Naive thymus-derived CD4-positive, alpha-beta T cell (primary cell): ENCODE measurements at regions of chr4 and their contacts with region 1.

Region 1: DNA sequence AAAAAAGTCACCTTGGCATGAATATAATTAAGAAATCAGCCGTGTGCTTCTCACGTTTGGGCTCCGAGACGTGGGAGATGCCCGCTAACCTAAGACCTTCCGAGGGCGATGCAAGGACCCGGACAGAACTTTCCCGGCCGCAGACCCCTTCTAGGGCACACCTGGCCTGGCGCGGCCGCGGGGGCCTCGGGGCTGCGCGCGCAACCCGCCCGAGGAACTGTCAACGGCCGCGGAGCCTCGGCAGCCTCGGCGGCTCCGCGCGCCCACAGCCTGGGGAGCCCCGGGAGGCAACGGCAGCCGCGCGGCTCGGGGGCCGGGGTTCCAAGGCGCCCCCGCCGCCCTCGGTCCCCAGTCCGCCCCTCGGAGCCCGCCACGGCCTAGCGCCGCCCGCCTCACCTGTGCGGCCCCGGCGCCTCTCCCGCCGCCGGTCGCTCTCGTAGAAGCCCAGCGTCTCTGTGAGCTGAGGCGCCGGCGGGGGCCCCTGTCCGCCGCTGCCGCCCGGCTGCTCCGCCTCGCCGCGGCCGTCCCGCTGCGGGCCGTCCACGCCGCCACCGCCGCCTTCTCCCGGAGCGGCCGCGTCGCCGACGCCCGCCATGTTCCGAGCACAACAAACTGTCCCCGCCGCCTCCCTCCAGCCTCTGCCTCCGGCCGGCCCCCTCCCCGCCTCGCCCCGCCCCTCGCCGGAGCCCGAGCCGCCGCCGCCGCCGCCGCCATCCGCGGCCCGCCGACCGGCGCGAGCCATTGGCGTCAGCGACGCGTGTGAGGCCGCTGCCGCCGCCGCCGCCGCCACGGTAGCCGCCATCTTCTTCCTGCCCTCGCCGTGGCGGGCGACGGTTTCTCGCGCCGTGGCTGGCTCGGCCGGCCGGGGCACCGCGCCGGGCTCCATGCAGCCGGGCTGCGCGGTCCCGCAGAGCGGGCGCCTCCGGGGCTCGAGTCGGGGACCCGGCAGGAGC is at the start of gene TAPT1:
- DNase-seq: peak; percentile 49 to 89 (median 63)
- ATAC-seq: peak; percentile 84
- H3K4me3 ChIP-seq: peak within 1 kb of the TSS; percentile 74
- H3K4me3 Mint-ChIP-seq: peak within 1 kb of the TSS; percentile 85 to 96 (median 92)
- H3K27ac ChIP-seq: peak within 1 kb of the TSS; percentile 84
- H3K27ac Mint-ChIP-seq: peak within 1 kb of the TSS; percentile 90 to 98 (median 96)
- H3K4me1 ChIP-seq: peaks cover 30 to 35% of the 10 kb centered on the region in 2 donors
- H3K4me1 Mint-ChIP-seq: peaks cover 40 to 67% (median 58%) of the 10 kb centered on the region in 7 donors
- H3K27me3 ChIP-seq: no peaks in the 10 kb centered on the region
- H3K27me3 Mint-ChIP-seq: peaks cover 0 to 2% (median 0%) of the 10 kb centered on the region in 5 donors
- total RNA-seq, gene TAPT1: 43.0 to 82.5 (median 70.6) TPM

Region 2: DNA sequence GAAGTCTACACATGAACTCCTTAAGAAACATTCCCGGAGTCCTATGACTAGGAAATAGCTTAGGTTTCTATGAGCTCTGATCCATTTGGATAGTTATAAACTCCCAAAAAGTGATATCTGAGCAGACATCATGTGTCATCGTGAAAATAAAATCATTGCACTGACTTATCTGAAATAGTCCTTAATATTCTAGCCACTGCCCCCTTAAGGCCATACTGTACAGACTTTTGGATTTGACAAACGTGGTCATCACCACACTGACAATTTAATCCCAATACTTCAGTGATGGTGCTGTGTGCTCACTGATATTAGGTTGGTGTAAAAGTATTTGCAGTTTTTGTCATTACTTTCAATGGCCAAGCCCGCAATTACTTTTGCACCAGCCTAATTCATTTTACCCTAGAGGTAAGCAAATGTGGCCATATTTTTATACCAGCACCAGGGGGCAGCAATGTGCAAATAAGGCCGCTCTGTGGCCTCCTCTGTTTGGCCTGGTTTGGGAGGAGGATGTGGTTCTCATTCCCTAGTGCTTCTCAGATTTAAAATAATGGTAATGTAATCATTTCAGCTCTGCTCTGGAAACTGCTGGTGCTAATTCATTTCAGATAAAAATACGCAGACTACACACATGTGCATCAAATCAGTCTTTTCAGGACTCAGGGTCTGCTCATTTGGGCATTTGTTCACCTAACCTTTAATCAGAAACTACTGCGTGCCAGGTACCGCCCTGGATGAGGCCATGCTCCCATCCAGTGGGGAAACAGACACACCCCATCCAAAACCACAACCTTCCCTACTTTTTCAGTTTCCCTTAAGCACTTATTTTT is 994.7 kb before region 1 on chr4:
- CTCF ChIA-PET with region 1: no interaction called
- POLR2A ChIA-PET with region 1: no interaction called
- intact Hi-C with region 1: loop called in 1 of 2 experiments (anchors 10 kb)
- DNase-seq: peak; percentile 45 to 72 (median 69)
- ATAC-seq: peak; percentile 86
- H3K4me3 ChIP-seq: no peak overlapping the region
- H3K4me3 Mint-ChIP-seq: no peak overlapping the region
- H3K27ac ChIP-seq: no peak overlapping the region
- H3K27ac Mint-ChIP-seq: peak overlapping the region in 4 of 9 donors; percentile 11 to 68 (median 44)
- H3K4me1 ChIP-seq: peaks cover 0 to 27% of the 10 kb centered on the region in 2 donors
- H3K4me1 Mint-ChIP-seq: peaks cover 24 to 39% (median 35%) of the 10 kb centered on the region in 7 donors
- H3K27me3 ChIP-seq: no peaks in the 10 kb centered on the region
- H3K27me3 Mint-ChIP-seq: peaks cover 0 to 3% (median 0%) of the 10 kb centered on the region in 5 donors

Region 3: DNA sequence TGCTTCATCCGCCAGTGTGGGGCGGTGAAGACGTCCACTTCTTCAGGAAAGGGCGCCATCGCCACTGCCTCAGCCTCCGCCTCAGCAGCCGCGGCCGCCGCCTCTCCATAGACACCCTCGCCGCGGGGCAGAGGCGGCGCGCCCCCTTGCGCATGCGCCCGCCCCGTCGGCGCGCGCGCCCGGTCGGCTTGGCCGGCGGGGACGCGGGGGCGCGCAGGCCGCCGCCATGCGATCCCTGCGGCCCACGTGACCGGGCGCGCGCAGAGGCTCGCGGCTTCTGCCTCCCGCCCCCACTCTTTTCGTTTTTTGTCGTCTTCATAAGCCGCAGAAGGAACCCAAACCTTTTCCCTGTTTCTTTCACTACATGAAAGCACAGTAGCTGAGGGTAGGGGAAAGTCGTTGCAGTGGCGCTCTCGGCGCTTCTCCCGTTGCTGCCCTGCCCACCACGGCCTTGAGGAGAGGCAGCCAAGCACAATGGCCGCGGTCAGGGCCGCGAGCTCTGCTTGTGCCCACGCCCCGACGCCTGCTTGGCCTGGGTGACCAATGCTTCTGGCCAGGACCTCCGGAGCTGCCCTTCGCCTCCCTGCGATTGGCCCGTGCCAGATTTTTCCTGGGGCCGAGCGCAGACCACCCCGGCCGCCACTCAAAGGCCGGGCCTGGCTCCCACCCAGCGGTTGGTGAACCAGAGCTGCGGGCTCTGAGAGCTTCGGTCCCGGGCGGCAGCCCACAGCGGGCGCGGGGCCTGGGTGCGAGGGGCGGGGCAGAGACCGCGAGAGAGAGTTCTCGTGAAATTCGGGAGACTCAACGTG is 570.7 kb before region 1 on chr4 and contains the start of gene FBXL5:
- CTCF ChIA-PET with region 1: no interaction called
- POLR2A ChIA-PET with region 1: interaction called, 6 read pairs
- intact Hi-C with region 1: loop called (anchors 1 to 5 kb)
- DNase-seq: peak; percentile 77 to 92 (median 87)
- ATAC-seq: peak; percentile 92
- H3K4me3 ChIP-seq: peak within 1 kb of the TSS; percentile 87
- H3K4me3 Mint-ChIP-seq: peak within 1 kb of the TSS; percentile 94 to 100 (median 97)
- H3K27ac ChIP-seq: peak within 1 kb of the TSS; percentile 90
- H3K27ac Mint-ChIP-seq: peak within 1 kb of the TSS; percentile 90 to 98 (median 98)
- H3K4me1 ChIP-seq: peaks cover 29% of the 10 kb centered on the region in 2 donors
- H3K4me1 Mint-ChIP-seq: peaks cover 21 to 49% (median 45%) of the 10 kb centered on the region in 7 donors
- H3K27me3 ChIP-seq: no peaks in the 10 kb centered on the region
- H3K27me3 Mint-ChIP-seq: peaks cover 0 to 2% (median 0%) of the 10 kb centered on the region in 5 donors
- total RNA-seq, gene FBXL5: 39.1 to 107 (median 57.4) TPM

Region 4: DNA sequence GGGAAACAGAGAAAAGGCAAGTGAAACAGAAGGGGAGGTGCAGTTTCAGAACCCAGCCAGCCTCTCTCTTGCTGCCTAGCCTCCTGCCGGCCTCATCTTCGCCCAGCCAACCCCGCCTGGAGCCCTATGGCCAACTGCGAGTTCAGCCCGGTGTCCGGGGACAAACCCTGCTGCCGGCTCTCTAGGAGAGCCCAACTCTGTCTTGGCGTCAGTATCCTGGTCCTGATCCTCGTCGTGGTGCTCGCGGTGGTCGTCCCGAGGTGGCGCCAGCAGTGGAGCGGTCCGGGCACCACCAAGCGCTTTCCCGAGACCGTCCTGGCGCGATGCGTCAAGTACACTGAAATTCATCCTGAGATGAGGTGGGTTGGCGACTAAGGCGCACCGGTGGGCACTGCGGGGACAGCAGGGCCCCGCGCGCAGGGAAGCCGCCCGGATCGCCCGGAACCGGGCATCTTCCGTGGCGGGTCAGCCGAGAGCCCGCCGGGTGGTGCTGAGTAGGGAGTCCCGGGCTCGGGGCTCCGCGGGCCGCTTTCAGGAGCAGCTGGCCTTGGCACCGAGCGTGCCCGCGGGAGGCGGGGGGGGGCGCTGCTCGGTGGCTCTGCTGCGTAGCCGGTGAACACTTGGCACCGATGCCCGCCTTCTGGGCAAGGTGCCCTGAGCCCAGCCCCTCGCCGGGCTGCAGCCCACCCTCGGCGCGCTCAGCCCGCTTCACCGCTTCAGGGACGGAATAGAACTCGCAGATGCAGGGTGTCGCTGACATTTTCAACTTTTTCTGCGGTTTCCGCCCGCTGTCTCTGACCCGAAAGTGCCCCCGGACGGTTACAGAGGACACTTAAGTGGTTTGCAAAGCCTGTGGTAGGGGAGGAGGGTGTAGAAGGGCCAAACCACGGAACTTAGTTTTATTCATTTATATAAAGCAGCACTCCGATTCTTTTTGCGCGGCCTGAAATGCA is 447.6 kb before region 1 on chr4 and contains the start of gene CD38:
- CTCF ChIA-PET with region 1: no interaction called
- POLR2A ChIA-PET with region 1: no interaction called
- intact Hi-C with region 1: loop called in 1 of 2 experiments (anchors 5 kb)
- DNase-seq: peak; percentile 16 to 67 (median 37)
- ATAC-seq: peak; percentile 66
- H3K4me3 ChIP-seq: peak within 1 kb of the TSS; percentile 71
- H3K4me3 Mint-ChIP-seq: peak within 1 kb of the TSS; percentile 86 to 97 (median 94)
- H3K27ac ChIP-seq: peak within 1 kb of the TSS; percentile 65
- H3K27ac Mint-ChIP-seq: peak within 1 kb of the TSS; percentile 81 to 93 (median 87)
- H3K4me1 ChIP-seq: peaks cover 12 to 32% of the 10 kb centered on the region in 2 donors
- H3K4me1 Mint-ChIP-seq: peaks cover 37 to 82% (median 77%) of the 10 kb centered on the region in 7 donors
- H3K27me3 ChIP-seq: no peaks in the 10 kb centered on the region
- H3K27me3 Mint-ChIP-seq: no peaks in the 10 kb centered on the region
- total RNA-seq, gene CD38: 5.6 to 189 (median 14.3) TPM

Region 5: DNA sequence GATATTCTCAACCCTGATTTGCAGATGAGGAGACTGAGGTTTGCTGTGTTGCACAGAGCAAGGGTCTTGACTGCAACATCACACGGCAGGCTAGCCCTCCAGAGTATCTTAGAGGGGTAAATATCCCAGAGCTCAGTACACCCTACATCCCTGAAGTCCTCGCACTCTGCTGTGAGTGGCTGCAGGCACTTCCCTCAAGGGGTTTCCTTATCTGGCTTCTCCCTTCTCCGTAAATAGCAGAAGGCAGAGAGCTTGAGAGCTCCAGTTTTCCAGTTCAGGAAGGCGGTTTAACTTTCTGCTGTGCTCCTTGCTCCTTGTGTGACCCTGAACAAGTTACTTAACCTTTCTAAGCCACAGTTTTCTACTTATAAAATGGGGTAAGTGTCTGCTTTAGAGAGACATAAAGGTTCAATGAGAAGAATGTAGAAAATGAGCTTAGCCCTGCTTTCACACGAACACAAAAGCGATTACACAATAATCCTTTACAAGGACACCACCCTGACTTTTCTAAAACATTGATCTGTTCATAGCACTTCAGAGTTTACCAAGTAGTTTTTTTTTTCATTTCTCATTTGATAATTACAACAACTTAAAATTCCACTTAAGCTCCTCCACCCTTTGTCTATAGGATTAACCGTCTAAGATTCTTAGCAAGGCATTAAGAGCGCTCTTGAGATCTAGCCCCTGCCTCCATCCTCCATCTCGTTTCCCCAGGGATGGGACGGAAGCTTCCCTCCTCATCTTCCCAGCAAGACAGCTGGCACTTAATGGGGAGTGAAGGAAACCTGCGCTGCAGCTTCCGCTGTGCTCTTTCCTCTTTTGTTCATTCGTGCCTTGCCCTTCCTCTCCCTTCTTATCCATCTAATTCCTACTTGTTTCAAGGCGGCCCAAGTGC is 68.3 kb before region 1 on chr4:
- CTCF ChIA-PET with region 1: no interaction called
- POLR2A ChIA-PET with region 1: no interaction called
- intact Hi-C with region 1: no loop called
- DNase-seq: no peak
- ATAC-seq: no peak
- H3K4me3 ChIP-seq: no peak overlapping the region
- H3K4me3 Mint-ChIP-seq: no peak overlapping the region
- H3K27ac ChIP-seq: no peak overlapping the region
- H3K27ac Mint-ChIP-seq: peak overlapping the region in 1 of 9 donors; percentile 40
- H3K4me1 ChIP-seq: no peaks in the 10 kb centered on the region
- H3K4me1 Mint-ChIP-seq: peaks cover 0 to 14% (median 0%) of the 10 kb centered on the region in 7 donors
- H3K27me3 ChIP-seq: no peaks in the 10 kb centered on the region
- H3K27me3 Mint-ChIP-seq: no peaks in the 10 kb centered on the region

Region 6: DNA sequence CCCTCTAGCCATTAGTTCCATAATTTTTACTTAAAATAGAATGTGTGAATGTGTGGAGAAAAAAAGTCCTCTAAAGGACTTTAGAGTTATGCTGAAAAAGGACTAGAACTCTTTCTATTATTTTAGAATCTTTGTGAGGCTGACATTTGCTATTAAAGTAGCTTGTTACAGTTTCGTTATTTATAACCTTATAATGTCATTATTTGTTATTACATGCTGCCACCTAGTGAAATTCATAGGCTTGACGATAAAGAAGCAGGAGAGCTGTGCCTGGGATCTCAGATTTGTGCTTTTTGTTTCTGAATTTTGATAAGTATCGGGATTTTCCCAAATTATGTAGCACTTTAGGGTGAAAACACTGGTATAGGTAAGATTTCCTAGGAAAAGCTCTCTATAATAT is 38.7 kb after region 1 on chr4:
- CTCF ChIA-PET with region 1: interaction called, 3 read pairs
- POLR2A ChIA-PET with region 1: interaction called, 3 read pairs
- intact Hi-C with region 1: loop called (anchors 2 to 5 kb)
- DNase-seq: peak in 7 of 9 donors; percentile 14 to 59 (median 34)
- ATAC-seq: peak; percentile 40
- H3K4me3 ChIP-seq: no peak overlapping the region
- H3K4me3 Mint-ChIP-seq: no peak overlapping the region
- H3K27ac ChIP-seq: no peak overlapping the region
- H3K27ac Mint-ChIP-seq: no peak overlapping the region
- H3K4me1 ChIP-seq: peaks cover 0 to 3% of the 10 kb centered on the region in 2 donors
- H3K4me1 Mint-ChIP-seq: peaks cover 0 to 11% (median 4%) of the 10 kb centered on the region in 7 donors
- H3K27me3 ChIP-seq: no peaks in the 10 kb centered on the region
- H3K27me3 Mint-ChIP-seq: peaks cover 0 to 2% (median 0%) of the 10 kb centered on the region in 5 donors

Region 7: DNA sequence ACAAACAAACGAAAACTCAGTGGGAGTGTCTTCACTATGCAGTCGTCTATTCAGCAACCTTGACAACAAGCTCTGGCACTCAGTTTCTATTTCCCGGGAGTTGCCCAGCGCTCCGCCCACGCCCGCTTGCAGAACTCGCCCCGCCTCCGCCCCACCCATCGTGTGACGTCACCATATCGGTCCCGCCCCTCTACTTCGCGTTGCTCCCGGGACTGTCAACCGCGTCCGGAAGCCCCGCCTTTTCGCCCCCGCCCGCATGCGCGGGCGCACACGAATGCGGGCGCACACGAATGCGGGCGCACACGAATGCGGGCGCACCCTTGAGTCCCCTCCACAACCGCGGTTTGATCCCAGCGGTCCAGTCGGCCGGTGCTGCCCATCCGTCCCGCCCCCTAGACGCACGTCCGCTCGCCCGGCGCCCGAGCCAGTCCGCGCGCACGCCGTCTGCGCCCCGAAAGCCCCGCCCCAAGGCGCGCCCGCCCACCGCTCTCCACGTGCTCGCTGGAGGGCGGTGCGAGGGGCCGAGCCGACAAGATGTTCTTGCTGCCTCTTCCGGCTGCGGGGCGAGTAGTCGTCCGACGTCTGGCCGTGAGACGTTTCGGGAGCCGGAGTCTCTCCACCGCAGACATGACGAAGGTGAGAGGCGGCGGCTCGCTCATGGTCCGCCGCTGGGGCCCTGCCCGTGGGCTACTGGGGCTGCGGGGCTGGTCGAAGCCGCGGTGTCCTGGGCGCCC is 1351.0 kb after region 1 on chr4 and contains the start of gene LAP3:
- CTCF ChIA-PET with region 1: no interaction called
- POLR2A ChIA-PET with region 1: no interaction called
- intact Hi-C with region 1: loop called in 1 of 2 experiments (anchors 1 kb)
- DNase-seq: peak; percentile 97 to 100 (median 99)
- ATAC-seq: peak; percentile 94
- H3K4me3 ChIP-seq: peak within 1 kb of the TSS; percentile 77
- H3K4me3 Mint-ChIP-seq: peak within 1 kb of the TSS; percentile 78 to 96 (median 92)
- H3K27ac ChIP-seq: peak within 1 kb of the TSS; percentile 96
- H3K27ac Mint-ChIP-seq: peak within 1 kb of the TSS; percentile 92 to 100 (median 97)
- H3K4me1 ChIP-seq: peaks cover 4 to 11% of the 10 kb centered on the region in 2 donors
- H3K4me1 Mint-ChIP-seq: peaks cover 20 to 47% (median 24%) of the 10 kb centered on the region in 7 donors
- H3K27me3 ChIP-seq: no peaks in the 10 kb centered on the region
- H3K27me3 Mint-ChIP-seq: peaks cover 0 to 2% (median 0%) of the 10 kb centered on the region in 5 donors
- total RNA-seq, gene LAP3: 25.2 to 142 (median 54.9) TPM

Region 8: DNA sequence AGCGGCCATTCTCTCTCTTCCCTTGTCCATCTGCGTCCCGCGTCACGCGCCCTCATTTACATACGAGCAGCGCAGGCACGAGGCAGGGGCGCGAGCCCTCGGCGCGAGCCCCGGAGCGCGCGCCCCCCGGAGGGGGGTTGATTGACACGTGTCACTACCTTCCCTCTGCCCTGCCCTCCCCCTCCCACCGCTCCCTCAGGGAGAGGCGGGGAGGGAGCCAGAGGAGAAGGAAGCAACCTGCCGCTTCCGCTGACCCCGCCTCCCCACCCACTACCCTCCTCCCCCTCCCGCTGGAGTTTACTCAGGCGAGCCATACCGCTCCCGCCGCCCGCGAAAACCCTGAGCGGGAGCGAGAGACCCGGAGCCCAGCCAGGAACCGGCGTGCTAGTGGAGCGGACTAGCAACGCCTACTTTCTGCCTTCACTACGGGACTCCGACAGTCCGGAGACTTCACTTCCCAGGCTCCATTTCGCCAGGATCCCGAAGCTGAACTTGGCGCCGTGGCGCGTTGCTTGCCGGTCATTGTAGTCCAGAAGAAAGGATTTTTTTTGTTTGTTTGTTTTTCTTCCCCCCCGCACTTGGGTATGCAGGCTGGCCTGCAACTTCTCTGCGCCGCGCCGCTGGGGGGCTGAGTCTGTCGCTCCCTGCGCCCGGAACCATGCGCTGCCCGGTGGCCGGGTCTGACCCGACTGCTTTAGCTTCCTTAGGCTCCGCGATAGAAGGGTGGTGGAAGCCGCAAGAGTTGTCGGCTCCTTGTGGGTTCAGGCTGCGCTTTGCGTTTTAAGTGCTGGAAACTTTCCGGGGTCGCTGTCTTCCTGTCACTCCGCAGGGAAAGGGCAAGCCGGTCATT is 1795.8 kb after region 1 on chr4 and contains the start of gene LCORL:
- CTCF ChIA-PET with region 1: no interaction called
- POLR2A ChIA-PET with region 1: no interaction called
- intact Hi-C with region 1: loop called (anchors 2 to 5 kb)
- DNase-seq: peak; percentile 66 to 87 (median 84)
- ATAC-seq: peak; percentile 88
- H3K4me3 ChIP-seq: peak within 1 kb of the TSS; percentile 94
- H3K4me3 Mint-ChIP-seq: peak within 1 kb of the TSS; percentile 91 to 98 (median 94)
- H3K27ac ChIP-seq: peak within 1 kb of the TSS; percentile 75
- H3K27ac Mint-ChIP-seq: peak within 1 kb of the TSS; percentile 80 to 92 (median 89)
- H3K4me1 ChIP-seq: peaks cover 0 to 9% of the 10 kb centered on the region in 2 donors
- H3K4me1 Mint-ChIP-seq: peaks cover 13 to 28% (median 18%) of the 10 kb centered on the region in 7 donors
- H3K27me3 ChIP-seq: no peaks in the 10 kb centered on the region
- H3K27me3 Mint-ChIP-seq: peaks cover 0 to 75% (median 6%) of the 10 kb centered on the region in 5 donors
- total RNA-seq, gene LCORL: 7.7 to 15.2 (median 13.1) TPM